ENCODE measurements at regions of chr3 and their contacts with region 1.

Region 1: GRCh38 chr3:112979240-112979832 is 4.4 kb upstream of the CD200R1 start:
- DNase-seq: peak; percentile 63
- H3K4me3 ChIP-seq: no peak overlapping the region
- H3K27ac ChIP-seq: no peak overlapping the region
- H3K4me1 ChIP-seq: peaks cover 19% of the 10 kb centered on the region
- CTCF ChIP-seq: peak; percentile 94

Region 2: DNA sequence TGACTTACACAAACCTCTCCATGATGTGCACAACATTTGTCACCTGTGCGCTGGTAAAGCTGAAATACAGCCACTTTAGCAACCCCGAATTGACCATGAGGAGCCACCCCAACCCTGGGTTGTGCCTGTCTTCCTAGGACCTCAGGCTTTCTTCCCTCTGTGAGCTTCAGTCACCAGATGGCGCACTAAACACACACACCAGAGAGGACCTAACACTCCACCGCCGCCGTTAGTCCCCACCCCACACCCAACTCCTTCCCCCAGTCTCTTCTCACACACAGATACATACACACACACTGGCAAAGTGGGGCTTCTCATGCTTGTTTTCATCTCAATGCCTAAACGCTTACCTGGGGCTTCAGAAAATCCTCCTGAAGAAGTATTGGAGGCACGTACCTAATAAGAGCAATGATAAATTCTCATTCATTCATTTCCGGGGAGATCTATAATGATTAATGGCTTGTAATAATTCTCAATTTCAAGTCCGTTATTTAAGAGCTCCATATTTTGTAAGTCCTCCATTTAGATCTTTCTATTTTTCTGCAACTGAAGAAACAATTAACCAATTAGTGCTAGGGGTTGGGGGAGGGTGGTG is 336.3 kb before region 1 on chr3:
- CTCF ChIA-PET with region 1: no interaction called
- POLR2A ChIA-PET with region 1: no interaction called
- intact Hi-C with region 1: loop called (anchors 1 kb)
- DNase-seq: peak; percentile 83
- H3K4me3 ChIP-seq: peak overlapping the region; percentile 33
- H3K27ac ChIP-seq: no peak overlapping the region
- H3K4me1 ChIP-seq: peaks cover 6% of the 10 kb centered on the region
- CTCF ChIP-seq: peak; percentile 94

Region 3: GRCh38 chr3:112734718-112735350 is 244.5 kb before region 1 on chr3:
- CTCF ChIA-PET with region 1: interaction called, 12 read pairs
- POLR2A ChIA-PET with region 1: interaction called, 4 read pairs
- intact Hi-C with region 1: loop called (anchors 1 kb)
- DNase-seq: peak; percentile 73
- H3K4me3 ChIP-seq: no peak overlapping the region
- H3K27ac ChIP-seq: no peak overlapping the region
- H3K4me1 ChIP-seq: no peaks in the 10 kb centered on the region
- CTCF ChIP-seq: peak; percentile 92

Region 4: DNA sequence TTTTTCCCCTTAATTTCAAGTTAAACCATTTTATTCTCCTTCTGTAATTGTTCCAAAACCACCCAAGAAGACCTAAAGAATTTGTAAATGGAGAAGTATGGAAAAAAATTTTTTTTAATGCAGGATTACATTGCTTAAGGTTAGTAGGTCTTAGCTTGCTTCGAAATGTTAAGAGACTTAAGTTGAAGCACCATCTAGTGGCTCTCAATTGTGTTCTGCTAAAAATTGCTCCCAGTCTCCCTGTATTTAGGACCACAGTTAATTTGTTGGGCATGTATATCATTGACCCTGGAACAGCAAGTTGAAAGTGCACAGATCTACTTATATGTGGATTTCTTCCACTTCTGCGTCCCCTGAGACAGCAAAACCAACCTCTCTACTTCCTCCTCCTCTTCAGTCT is 165.1 kb before region 1 on chr3:
- CTCF ChIA-PET with region 1: no interaction called
- POLR2A ChIA-PET with region 1: interaction called, 3 read pairs
- intact Hi-C with region 1: loop called (anchors 2 kb)
- DNase-seq: peak; percentile 28
- H3K4me3 ChIP-seq: peak overlapping the region; percentile 17
- H3K27ac ChIP-seq: peak overlapping the region; percentile 45
- H3K4me1 ChIP-seq: peaks cover 21% of the 10 kb centered on the region
- CTCF ChIP-seq: peak; percentile 71

Region 5: DNA sequence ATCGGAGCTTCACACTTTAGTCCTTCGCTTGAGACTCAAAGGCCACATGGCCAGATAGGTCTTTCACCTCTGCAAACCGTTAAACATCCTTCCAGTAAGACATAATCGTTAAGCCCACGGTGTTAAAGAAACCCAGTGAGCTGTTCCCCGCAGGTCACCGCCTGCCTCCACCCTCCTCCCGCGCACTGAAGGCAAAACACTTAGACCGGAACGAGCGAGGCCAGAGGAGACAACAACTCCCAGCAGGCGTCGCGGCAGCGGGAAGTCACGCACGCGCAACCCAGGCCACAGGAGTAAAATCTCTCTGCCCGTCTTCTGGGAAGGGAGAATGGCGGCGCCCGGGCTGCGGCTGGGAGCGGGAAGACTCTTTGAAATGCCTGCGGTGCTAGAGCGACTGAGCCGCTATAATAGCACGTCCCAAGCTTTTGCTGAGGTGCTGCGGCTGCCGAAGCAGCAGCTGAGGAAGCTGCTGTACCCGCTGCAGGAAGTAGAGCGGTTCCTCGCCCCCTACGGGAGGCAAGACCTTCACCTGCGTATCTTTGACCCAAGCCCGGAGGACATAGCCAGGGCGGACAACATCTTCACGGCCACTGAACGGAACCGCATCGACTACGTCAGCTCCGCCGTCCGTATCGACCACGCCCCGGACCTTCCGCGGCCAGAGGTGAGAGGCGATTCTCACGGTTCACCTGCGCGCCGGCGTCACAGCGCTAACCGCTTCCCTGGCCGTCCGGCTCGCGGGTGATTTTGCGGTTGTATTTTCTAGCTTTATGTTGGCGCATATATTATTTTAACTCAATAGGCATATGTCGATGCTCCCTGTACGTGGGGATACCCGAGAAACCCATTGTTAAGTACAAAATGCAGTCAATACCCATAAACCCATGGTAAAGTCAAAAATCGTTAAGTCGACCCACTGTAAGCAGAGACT is 11.6 kb after region 1 on chr3 and contains the start of gene GTPBP8:
- CTCF ChIA-PET with region 1: interaction called, 8 read pairs
- POLR2A ChIA-PET with region 1: interaction called, 11 read pairs
- intact Hi-C with region 1: no loop called
- DNase-seq: peak; percentile 90
- H3K4me3 ChIP-seq: peak within 1 kb of the TSS; percentile 90
- H3K27ac ChIP-seq: peak within 1 kb of the TSS; percentile 86
- H3K4me1 ChIP-seq: peaks cover 33% of the 10 kb centered on the region
- CTCF ChIP-seq: no peak
- total RNA-seq, gene GTPBP8: 17.6 and 23.8 TPM in 2 replicates

Region 6: GRCh38 chr3:113585720-113586119 is 606.4 kb after region 1 on chr3:
- CTCF ChIA-PET with region 1: no interaction called
- POLR2A ChIA-PET with region 1: no interaction called
- intact Hi-C with region 1: no loop called
- DNase-seq: no peak
- H3K4me3 ChIP-seq: no peak overlapping the region
- H3K27ac ChIP-seq: no peak overlapping the region
- H3K4me1 ChIP-seq: no peaks in the 10 kb centered on the region
- CTCF ChIP-seq: no peak